ENCODE measurements at regions of chr14 and their contacts with region 1.

Region 1: DNA sequence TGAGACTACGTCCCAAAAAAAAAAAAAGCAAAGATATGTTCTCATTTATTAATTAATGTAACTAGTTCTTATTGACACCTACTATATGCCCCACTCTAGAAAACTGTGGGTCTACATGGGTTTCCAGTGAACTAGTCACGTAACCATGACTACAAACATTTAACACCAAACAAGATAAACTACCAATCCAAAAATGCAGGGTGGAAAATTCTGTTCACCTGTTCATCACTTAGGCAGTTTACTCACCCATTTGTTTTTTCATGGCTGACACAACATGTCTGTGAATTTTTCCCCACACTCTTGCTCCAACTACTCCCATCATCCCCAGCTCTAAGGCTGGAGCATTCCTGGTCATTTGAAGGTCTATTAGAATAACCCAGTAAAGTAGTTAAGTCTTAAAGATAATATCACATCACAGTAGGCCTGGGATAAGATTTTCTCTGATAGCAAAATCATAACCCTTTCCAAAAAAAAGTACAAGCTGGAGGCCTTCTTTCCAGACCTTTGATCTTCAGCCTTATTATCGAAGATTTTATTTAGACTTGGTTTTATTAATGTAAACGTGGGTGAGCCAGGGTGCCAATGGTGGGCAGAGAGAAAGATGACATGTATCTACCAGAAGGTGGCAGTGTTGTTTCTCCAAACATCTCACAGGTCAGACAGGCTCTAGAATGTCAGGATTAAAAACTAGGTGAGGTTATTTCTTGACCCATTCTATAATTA is 61.6 kb upstream of the DAAM1 start:
- DNase-seq: peak in 4 of 9 experiments; percentile 13 to 75 (median 42)
- ATAC-seq: peak; percentile 74
- H3K4me3 ChIP-seq: no peak overlapping the region
- H3K4me3 Mint-ChIP-seq: no peak overlapping the region
- H3K27ac ChIP-seq: no peak overlapping the region
- H3K27ac Mint-ChIP-seq: no peak overlapping the region
- H3K4me1 ChIP-seq: no peaks in the 10 kb centered on the region
- H3K4me1 Mint-ChIP-seq: no peaks in the 10 kb centered on the region
- H3K27me3 ChIP-seq: no peaks in the 10 kb centered on the region
- H3K27me3 Mint-ChIP-seq: peaks cover 27% of the 10 kb centered on the region
- CTCF ChIP-seq: peak; percentile 93

Region 2: DNA sequence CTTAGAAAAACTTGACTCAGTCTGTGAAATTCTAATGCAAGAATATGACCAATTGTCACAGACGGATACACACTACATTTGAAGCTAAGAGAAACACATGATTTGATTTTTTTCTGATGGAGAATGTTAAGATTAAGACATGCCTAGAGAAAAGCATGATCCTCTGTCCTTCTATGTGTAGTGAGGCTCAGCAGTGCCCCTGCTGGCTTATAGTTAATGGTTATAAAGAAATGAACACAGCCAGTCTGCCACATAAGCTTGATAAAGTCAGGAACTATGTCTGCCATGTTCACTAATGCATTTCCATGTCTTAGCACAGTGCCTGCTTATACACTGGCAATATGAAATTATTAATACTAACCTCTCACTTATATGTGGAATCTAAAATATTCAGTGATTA is 106.5 kb before region 1 on chr14:
- CTCF ChIA-PET with region 1: no interaction called
- POLR2A ChIA-PET with region 1: no interaction called
- intact Hi-C with region 1: no loop called
- DNase-seq: no peak
- ATAC-seq: no peak
- H3K4me3 ChIP-seq: no peak overlapping the region
- H3K4me3 Mint-ChIP-seq: no peak overlapping the region
- H3K27ac ChIP-seq: no peak overlapping the region
- H3K27ac Mint-ChIP-seq: no peak overlapping the region
- H3K4me1 ChIP-seq: no peaks in the 10 kb centered on the region
- H3K4me1 Mint-ChIP-seq: no peaks in the 10 kb centered on the region
- H3K27me3 ChIP-seq: no peaks in the 10 kb centered on the region
- H3K27me3 Mint-ChIP-seq: peaks cover 10% of the 10 kb centered on the region
- CTCF ChIP-seq: no peak

Region 3: DNA sequence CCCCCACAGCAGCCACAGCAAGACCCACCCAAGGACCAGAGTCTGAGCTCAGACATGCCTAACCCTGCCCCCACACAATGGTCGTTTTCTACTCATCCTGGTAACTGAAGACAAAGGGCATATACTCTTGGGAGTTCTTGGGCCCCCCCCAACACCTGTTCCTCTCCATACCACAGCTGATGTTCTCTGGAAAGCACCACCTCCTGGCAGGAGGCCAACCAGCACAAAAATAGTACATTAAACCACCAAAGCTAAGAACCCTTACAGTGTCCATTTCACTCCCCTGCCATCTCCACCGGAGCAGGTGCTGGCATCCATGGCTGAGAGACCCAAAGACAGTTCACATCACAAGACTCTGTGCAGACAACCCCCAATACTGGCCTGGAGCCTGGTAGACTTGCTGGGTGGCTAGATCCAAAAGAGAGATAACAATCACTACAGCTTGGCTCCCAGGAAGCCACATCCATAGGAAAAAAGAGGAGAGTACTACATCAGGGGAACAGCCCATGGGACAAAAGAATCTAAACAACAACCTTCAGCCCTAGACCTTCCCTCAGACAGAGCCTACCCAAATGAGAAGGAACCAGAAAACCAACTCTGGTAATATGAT is 18.9 kb before region 1 on chr14:
- CTCF ChIA-PET with region 1: interaction called, 11 read pairs
- POLR2A ChIA-PET with region 1: no interaction called
- intact Hi-C with region 1: no loop called
- DNase-seq: no peak
- ATAC-seq: no peak
- H3K4me3 ChIP-seq: no peak overlapping the region
- H3K4me3 Mint-ChIP-seq: no peak overlapping the region
- H3K27ac ChIP-seq: no peak overlapping the region
- H3K27ac Mint-ChIP-seq: no peak overlapping the region
- H3K4me1 ChIP-seq: no peaks in the 10 kb centered on the region
- H3K4me1 Mint-ChIP-seq: no peaks in the 10 kb centered on the region
- H3K27me3 ChIP-seq: no peaks in the 10 kb centered on the region
- H3K27me3 Mint-ChIP-seq: peaks cover 23% of the 10 kb centered on the region
- CTCF ChIP-seq: no peak

Region 4: GRCh38 chr14:59166258-59166657 is 39.4 kb after region 1 on chr14:
- CTCF ChIA-PET with region 1: no interaction called
- POLR2A ChIA-PET with region 1: no interaction called
- intact Hi-C with region 1: no loop called
- DNase-seq: no peak
- ATAC-seq: no peak
- H3K4me3 ChIP-seq: no peak overlapping the region
- H3K4me3 Mint-ChIP-seq: no peak overlapping the region
- H3K27ac ChIP-seq: no peak overlapping the region
- H3K27ac Mint-ChIP-seq: no peak overlapping the region
- H3K4me1 ChIP-seq: no peaks in the 10 kb centered on the region
- H3K4me1 Mint-ChIP-seq: peaks cover 3% of the 10 kb centered on the region
- H3K27me3 ChIP-seq: no peaks in the 10 kb centered on the region
- H3K27me3 Mint-ChIP-seq: peaks cover 11% of the 10 kb centered on the region
- CTCF ChIP-seq: no peak

Region 5: DNA sequence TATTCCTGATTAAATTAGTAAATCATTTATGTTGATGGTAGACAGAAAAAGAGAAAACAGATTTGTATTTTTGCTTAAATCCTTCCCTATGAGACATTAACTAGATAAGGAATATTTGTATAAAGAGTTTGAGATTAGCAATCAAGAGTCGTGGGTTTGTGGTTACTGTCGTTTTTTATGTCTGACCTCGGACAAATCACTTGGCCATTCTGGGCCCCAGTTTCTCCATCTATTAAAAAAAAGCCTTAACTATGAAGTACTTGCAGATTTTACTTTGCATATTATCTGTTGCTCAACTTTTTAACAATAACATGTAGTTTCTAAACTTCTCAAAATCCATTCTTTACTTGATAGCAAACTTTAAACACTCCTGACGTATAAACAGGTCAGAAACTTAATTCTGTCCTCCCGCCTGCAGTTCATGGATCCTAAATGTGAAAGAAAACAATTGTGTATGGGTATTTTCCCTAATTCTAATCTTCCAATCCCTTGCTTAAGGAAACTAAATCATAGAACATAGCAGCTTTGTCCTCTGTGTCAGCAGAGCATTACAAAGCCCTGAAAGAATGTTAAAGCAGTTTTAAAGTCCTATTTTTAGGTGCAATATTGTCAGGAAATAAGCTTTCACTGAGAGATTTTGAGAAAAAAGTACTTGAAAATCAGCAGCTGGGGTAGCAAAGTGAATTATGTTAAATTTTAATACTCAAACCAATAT is 220.1 kb after region 1 on chr14:
- CTCF ChIA-PET with region 1: no interaction called
- POLR2A ChIA-PET with region 1: no interaction called
- intact Hi-C with region 1: loop called (anchors 5 kb)
- DNase-seq: no peak
- ATAC-seq: no peak
- H3K4me3 ChIP-seq: no peak overlapping the region
- H3K4me3 Mint-ChIP-seq: no peak overlapping the region
- H3K27ac ChIP-seq: no peak overlapping the region
- H3K27ac Mint-ChIP-seq: no peak overlapping the region
- H3K4me1 ChIP-seq: no peaks in the 10 kb centered on the region
- H3K4me1 Mint-ChIP-seq: no peaks in the 10 kb centered on the region
- H3K27me3 ChIP-seq: no peaks in the 10 kb centered on the region
- H3K27me3 Mint-ChIP-seq: no peaks in the 10 kb centered on the region
- CTCF ChIP-seq: no peak

Region 6: DNA sequence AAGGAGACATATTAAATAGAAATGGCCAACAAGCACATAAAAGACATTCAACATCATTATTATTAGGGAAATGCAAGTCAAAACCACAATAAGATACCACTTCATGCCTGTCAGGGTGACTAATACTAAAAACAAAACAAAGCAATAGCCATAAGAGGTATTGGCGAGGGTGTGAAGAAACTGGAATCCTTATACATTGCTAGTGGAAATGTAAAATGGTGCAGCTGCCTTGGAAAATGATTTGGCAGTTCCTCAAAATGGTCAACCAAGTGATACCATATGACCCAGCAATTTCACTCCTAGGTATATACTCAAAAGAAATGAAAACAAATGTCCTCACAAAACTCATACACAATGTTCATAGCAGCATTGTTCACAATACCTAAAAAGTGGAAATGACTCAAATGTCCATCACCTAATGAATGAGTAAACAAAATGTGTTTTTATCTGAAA is 311.4 kb after region 1 on chr14:
- CTCF ChIA-PET with region 1: interaction called, 30 read pairs
- POLR2A ChIA-PET with region 1: no interaction called
- intact Hi-C with region 1: no loop called
- DNase-seq: no peak
- ATAC-seq: no peak
- H3K4me3 ChIP-seq: no peak overlapping the region
- H3K4me3 Mint-ChIP-seq: no peak overlapping the region
- H3K27ac ChIP-seq: no peak overlapping the region
- H3K27ac Mint-ChIP-seq: no peak overlapping the region
- H3K4me1 ChIP-seq: no peaks in the 10 kb centered on the region
- H3K4me1 Mint-ChIP-seq: no peaks in the 10 kb centered on the region
- H3K27me3 ChIP-seq: no peaks in the 10 kb centered on the region
- H3K27me3 Mint-ChIP-seq: no peaks in the 10 kb centered on the region
- CTCF ChIP-seq: no peak

Region 7: GRCh38 chr14:59576332-59577294 is 449.7 kb after region 1 on chr14 and contains the start of gene CCDC175:
- CTCF ChIA-PET with region 1: interaction called, 40 read pairs
- POLR2A ChIA-PET with region 1: no interaction called
- intact Hi-C with region 1: loop called (anchors 1 kb)
- DNase-seq: peak; percentile 50 to 89 (median 82)
- ATAC-seq: peak; percentile 98
- H3K4me3 ChIP-seq: peak within 1 kb of the TSS; percentile 55 to 58
- H3K4me3 Mint-ChIP-seq: peak within 1 kb of the TSS; percentile 72
- H3K27ac ChIP-seq: no peak within 1 kb of the TSS
- H3K27ac Mint-ChIP-seq: no peak within 1 kb of the TSS
- H3K4me1 ChIP-seq: peaks cover 9% of the 10 kb centered on the region
- H3K4me1 Mint-ChIP-seq: peaks cover 10% of the 10 kb centered on the region
- H3K27me3 ChIP-seq: peaks cover 0 to 4% of the 10 kb centered on the region in 2 experiments
- H3K27me3 Mint-ChIP-seq: peaks cover 27% of the 10 kb centered on the region
- CTCF ChIP-seq: peak; percentile 85
- total RNA-seq, gene CCDC175: not detected

Measured in CD8-positive, alpha-beta T cell (primary cell).